ENCODE measurements at regions of chr7 and their contacts with region 1.

Region 1: DNA sequence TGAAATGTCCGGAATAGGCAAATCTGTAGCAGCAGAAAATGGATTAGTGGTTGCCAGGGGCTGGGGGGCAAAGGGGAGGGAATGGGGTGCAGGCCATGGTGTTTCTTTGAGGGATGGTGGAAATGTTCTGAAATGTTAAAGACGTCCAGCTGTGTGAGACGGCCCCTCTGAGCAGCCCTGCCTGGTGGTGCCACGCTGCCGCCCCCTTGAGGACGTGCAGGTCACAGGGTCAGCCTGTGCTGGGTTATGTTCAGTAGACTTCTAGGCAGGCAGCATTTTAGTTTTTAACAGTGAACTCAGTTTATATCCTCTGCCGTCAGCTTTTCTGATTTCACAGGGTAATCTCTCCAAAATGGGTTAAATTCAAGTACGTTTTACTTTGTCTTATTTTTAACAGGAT is 9.4 kb downstream of the NUB1 start:
- DNase-seq: no peak
- H3K4me3 Mint-ChIP-seq: peak overlapping the region; percentile 54
- H3K27ac Mint-ChIP-seq: peak overlapping the region; percentile 90
- H3K4me1 Mint-ChIP-seq: peaks cover 35% of the 10 kb centered on the region
- H3K27me3 Mint-ChIP-seq: no peaks in the 10 kb centered on the region

Region 2: GRCh38 chr7:151028131-151028947 is 322.7 kb before region 1 on chr7 and contains the start of gene ABCB8:
- intact Hi-C with region 1: loop called (anchors 2 kb)
- DNase-seq: peak; percentile 99
- H3K4me3 Mint-ChIP-seq: peak within 1 kb of the TSS; percentile 96
- H3K27ac Mint-ChIP-seq: peak within 1 kb of the TSS; percentile 93
- H3K4me1 Mint-ChIP-seq: peaks cover 13% of the 10 kb centered on the region
- H3K27me3 Mint-ChIP-seq: peaks cover 2% of the 10 kb centered on the region
- total RNA-seq, gene ABCB8: 59.5 and 59.6 TPM in 2 replicates

Region 3: DNA sequence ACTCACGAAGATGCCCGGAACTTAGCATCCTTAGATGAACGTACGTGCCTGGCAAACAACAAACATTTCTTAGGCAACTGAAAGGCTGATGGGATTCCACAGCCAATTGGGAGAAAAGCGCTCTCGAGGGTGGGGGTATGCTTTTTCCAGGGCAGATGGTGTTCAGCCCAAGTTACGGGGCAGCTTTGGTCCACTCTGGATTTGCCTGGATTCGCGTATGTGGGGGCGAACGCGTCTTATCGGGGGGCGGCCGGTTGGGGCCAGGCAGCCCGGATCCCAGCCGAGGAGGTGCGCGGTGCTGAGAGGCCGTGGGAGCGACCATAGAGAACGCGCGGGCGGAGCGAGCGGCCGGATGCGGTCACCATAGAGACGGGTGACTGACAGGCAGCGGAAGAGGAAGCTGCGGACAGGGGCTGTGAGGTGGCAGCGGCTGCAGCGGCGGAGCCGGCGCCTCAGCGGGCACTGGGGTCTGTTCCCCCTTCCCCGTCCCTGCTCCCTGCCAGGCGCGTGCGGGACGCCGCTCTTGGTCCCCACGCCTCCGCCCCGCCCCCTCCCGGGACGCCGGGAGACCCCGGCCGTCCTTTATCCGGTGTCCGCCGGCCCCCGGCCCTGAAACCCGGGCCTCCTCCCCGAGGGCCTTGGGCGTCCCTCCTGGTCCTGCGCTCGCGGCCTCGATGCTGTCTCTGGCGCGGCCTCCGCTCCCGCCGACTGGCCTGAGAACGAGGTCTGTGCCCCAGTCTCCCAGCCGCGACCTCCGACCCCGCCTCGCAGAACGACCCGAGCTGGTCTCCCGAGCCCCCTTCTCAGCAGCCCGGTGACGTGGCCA is 118.7 kb before region 1 on chr7 and contains the start of gene CHPF2:
- intact Hi-C with region 1: loop called (anchors 2 kb)
- DNase-seq: peak; percentile 89
- H3K4me3 Mint-ChIP-seq: peak within 1 kb of the TSS; percentile 100
- H3K27ac Mint-ChIP-seq: peak within 1 kb of the TSS; percentile 99
- H3K4me1 Mint-ChIP-seq: peaks cover 23% of the 10 kb centered on the region
- H3K27me3 Mint-ChIP-seq: peaks cover 4% of the 10 kb centered on the region
- total RNA-seq, gene CHPF2: 43.8 and 46.0 TPM in 2 replicates

Region 4: DNA sequence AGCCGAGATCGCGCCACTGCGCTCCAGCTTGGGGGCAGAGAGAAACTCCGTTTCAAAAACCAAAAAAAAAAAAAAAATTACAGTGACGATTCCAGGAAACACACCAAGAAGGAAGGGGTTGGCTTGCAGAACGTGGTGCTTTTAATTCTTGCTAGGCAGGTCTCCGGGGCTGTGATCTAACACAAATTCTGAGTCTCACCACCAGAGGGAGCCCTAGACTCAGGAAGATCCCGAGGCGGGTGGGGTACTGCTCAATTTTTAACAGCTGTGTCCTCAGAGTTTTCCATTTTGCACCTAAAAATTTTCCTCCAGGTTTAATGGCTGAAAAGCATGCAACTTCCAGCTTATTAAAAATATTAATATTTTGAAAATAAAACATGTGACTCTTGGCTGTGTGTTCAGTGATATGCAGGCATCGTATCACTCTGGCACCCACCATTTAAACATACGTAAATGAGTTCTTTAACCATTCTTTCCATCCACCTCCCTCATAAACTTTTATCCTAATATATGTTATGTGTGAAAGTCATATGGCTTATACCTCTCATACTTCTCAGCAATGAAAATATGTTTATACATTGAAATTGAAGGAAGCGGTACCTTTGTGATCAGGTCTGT is 35.9 kb before region 1 on chr7:
- intact Hi-C with region 1: loop called (anchors 1 kb)
- DNase-seq: peak; percentile 69
- H3K4me3 Mint-ChIP-seq: no peak overlapping the region
- H3K27ac Mint-ChIP-seq: no peak overlapping the region
- H3K4me1 Mint-ChIP-seq: peaks cover 7% of the 10 kb centered on the region
- H3K27me3 Mint-ChIP-seq: no peaks in the 10 kb centered on the region

Region 5: GRCh38 chr7:151631968-151632749 is 281.1 kb after region 1 on chr7:
- intact Hi-C with region 1: loop called (anchors 5 kb)
- DNase-seq: peak; percentile 80
- H3K4me3 Mint-ChIP-seq: peak overlapping the region; percentile 84
- H3K27ac Mint-ChIP-seq: peak overlapping the region; percentile 89
- H3K4me1 Mint-ChIP-seq: peaks cover 16% of the 10 kb centered on the region
- H3K27me3 Mint-ChIP-seq: no peaks in the 10 kb centered on the region

Region 6: GRCh38 chr7:151744656-151745638 is 393.9 kb after region 1 on chr7:
- intact Hi-C with region 1: loop called (anchors 1 kb)
- DNase-seq: no peak
- H3K4me3 Mint-ChIP-seq: no peak overlapping the region
- H3K27ac Mint-ChIP-seq: peak overlapping the region; percentile 55
- H3K4me1 Mint-ChIP-seq: peaks cover 21% of the 10 kb centered on the region
- H3K27me3 Mint-ChIP-seq: no peaks in the 10 kb centered on the region